Activated B cell treated with CpG ODN at 0.5 μM for 24 hours (primary cell): ENCODE measurements at regions of chr17 and their contacts with region 1.

Region 1: GRCh38 chr17:68719431-68719830 is 118.3 kb upstream of the FAM20A start:
- DNase-seq: no peak
- ATAC-seq: no peak
- H3K4me3 Mint-ChIP-seq: no peak overlapping the region
- H3K27ac Mint-ChIP-seq: no peak overlapping the region
- H3K4me1 Mint-ChIP-seq: no peaks in the 10 kb centered on the region
- H3K27me3 Mint-ChIP-seq: peaks cover 20% of the 10 kb centered on the region
- CTCF ChIP-seq: no peak

Region 2: DNA sequence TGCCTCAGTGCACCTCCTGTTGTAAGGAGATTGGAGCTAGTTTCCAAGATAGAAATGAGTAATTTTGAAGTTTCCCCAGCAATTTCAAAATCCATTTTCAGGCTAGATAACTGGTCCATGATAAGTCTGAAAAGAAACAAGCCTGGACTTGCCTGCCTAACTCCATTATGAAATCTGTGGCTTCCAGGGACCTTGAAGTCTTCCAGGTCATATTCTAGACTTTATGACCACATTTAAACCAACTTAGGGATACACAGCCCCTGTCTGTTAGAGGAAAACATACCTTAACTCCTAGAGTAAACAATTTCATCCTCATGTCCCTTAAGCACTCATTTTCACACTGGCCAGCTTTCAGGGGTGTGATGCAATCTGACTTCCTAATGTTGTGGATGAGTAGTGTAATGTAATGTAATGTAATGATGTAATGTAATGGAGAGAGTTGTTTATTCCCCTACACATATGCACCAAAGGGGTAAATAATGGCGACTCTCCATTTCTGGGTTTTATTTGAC is 21.5 kb before region 1 on chr17:
- CTCF ChIA-PET with region 1: no interaction called
- POLR2A ChIA-PET with region 1: interaction called, 10 read pairs
- intact Hi-C with region 1: no loop called
- DNase-seq: no peak
- ATAC-seq: no peak
- H3K4me3 Mint-ChIP-seq: no peak overlapping the region
- H3K27ac Mint-ChIP-seq: no peak overlapping the region
- H3K4me1 Mint-ChIP-seq: no peaks in the 10 kb centered on the region
- H3K27me3 Mint-ChIP-seq: peaks cover 2% of the 10 kb centered on the region
- CTCF ChIP-seq: no peak